ENCODE measurements at regions of chr18 and their contacts with region 1.

Region 1: GRCh38 chr18:23629444-23629946 is 33.2 kb downstream of the ANKRD29 start:
- DNase-seq: no peak
- H3K4me3 ChIP-seq: no peak overlapping the region
- H3K27ac ChIP-seq: no peak overlapping the region
- H3K4me1 ChIP-seq: peaks cover 23% of the 10 kb centered on the region
- H3K27me3 ChIP-seq: peaks cover 0 to 4% of the 10 kb centered on the region in 2 experiments
- CTCF ChIP-seq: no peak
- POLR2A ChIP-seq: no peak

Region 2: DNA sequence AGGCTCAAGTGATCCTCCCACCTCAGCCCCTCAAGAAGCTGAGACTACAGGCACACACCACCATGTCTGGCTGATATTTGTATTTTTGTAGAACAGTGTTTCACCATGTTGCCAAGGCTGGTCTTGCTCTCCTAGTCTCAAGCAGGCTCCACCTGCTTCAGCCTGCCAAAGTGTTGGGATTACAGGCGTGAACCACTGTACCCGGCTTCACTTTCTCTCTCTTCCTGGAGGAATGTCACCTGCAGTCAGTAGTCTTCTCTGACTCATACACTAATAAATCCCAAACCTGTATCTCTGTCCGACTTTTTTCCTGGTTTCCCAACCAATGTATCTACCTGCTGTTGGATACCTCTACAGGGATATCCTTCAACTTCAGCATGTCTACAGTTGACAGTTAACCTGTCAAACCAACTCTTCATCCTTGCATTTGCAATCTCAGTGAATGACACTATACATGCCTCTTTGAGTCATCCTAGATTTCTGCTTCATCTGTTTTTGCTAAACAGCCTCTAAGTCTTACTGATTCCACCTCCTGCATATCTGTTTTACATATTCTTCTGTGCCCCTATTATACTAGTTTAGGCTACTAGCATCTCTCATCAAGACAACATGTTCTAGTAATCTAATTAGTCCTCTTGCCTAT is 641.8 kb before region 1 on chr18:
- CTCF ChIA-PET with region 1: no interaction called
- POLR2A ChIA-PET with region 1: no interaction called
- dilution Hi-C with region 1: no loop called
- intact Hi-C with region 1: no loop called
- DNase-seq: no peak
- H3K4me3 ChIP-seq: no peak overlapping the region
- H3K27ac ChIP-seq: no peak overlapping the region
- H3K4me1 ChIP-seq: no peaks in the 10 kb centered on the region
- H3K27me3 ChIP-seq: no peaks in the 10 kb centered on the region
- CTCF ChIP-seq: no peak
- POLR2A ChIP-seq: no peak

Region 3: DNA sequence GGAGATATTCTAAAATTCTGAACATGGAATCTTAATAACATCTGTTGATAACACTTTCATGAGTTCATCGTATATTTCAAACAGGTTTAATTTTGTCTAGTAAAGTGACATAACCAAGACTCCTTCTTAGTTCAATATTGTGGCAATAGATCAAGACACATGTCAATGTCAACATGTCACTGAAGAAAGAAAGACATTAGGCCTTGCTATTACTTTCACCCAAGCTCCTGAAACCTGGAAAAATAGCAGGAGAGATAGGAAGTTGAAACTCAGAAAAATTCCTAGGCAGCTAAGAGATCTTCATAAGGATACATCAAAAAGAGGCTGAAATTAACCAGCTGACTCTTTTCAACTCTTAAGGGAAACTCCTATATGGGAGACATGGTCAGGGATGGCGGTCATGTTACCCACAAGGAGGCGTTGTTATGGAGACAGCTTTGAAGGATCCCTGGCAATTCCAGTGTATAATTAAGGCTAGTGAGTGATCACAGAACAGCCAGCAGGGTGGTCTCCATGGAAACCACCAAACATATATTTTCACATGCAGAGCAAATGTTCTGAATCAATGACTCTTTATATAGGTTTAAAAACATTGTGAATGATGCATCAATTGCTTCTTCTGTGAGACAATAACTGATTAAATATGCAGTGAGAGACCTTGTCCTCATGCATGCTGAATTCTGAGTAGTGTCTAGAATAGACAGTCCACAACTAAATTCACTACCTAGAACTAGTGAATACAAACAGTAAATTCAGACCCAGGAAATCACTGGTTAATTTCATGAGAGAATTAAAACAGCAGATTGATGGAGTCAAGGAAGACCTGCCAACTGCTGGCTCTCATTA is 291.7 kb before region 1 on chr18:
- CTCF ChIA-PET with region 1: no interaction called
- POLR2A ChIA-PET with region 1: no interaction called
- dilution Hi-C with region 1: no loop called
- intact Hi-C with region 1: no loop called
- DNase-seq: peak; percentile 58
- H3K4me3 ChIP-seq: no peak overlapping the region
- H3K27ac ChIP-seq: no peak overlapping the region
- H3K4me1 ChIP-seq: peaks cover 11% of the 10 kb centered on the region
- H3K27me3 ChIP-seq: no peaks in the 10 kb centered on the region
- CTCF ChIP-seq: no peak
- POLR2A ChIP-seq: no peak

Region 4: GRCh38 chr18:23612435-23613085 is 16.9 kb before region 1 on chr18:
- CTCF ChIA-PET with region 1: interaction called, 10 read pairs
- POLR2A ChIA-PET with region 1: no interaction called
- dilution Hi-C with region 1: no loop called
- intact Hi-C with region 1: no loop called
- DNase-seq: no peak
- H3K4me3 ChIP-seq: no peak overlapping the region
- H3K27ac ChIP-seq: no peak overlapping the region
- H3K4me1 ChIP-seq: no peaks in the 10 kb centered on the region
- H3K27me3 ChIP-seq: peaks cover 5 to 10% of the 10 kb centered on the region in 2 experiments
- CTCF ChIP-seq: no peak
- POLR2A ChIP-seq: no peak

Region 5: DNA sequence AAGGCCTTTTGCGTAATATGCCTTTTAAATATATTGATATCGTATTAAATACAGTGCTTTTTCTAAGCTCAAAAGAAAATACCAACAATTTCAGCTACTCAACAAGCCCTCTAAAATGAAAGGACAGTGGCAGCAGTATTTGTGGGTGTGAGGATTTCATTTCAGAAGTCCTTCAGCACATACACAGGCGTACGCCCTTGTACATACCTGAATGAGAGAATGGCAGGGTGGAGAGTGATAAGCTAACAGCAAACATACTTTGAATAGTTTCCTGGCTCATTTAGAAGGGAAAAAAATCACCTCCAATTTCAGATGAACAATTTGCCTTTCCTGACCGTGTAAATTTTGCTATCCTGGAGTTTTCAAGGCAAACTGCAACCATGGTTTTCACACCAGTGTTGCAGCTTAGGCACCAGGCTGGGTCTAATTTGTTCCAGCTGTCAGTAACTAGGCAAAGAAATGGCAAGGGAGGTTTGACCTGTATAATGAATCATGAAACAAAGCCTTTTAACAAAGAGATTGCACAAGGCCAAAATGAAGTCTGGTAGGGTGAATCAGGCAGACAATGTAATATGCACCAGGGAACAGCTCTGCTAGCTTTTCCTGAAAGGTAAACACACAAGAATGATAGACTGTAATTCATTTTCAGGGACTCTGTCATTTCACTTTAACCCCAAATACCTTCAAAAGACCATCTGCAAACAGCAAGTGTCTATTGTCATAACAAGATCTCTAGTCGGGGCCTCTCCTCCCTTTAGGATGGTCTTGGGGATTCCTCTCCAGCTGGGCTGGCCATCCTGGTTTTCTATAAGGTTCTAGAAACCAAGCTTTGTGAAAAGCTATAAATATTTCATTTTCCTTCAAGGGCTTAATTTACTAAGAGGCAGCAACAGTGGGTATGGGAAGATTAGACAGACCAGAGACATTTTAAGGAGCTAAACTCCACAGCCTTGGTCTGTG is 21.8 kb after region 1 on chr18:
- CTCF ChIA-PET with region 1: interaction called, 6 read pairs
- POLR2A ChIA-PET with region 1: no interaction called
- dilution Hi-C with region 1: no loop called
- intact Hi-C with region 1: loop called (anchors 2 kb)
- DNase-seq: peak; percentile 51
- H3K4me3 ChIP-seq: no peak overlapping the region
- H3K27ac ChIP-seq: no peak overlapping the region
- H3K4me1 ChIP-seq: peaks cover 10% of the 10 kb centered on the region
- H3K27me3 ChIP-seq: peaks cover 0 to 4% of the 10 kb centered on the region in 2 experiments
- CTCF ChIP-seq: no peak
- POLR2A ChIP-seq: no peak

Region 6: GRCh38 chr18:23662309-23663263 is 33.1 kb after region 1 on chr18 and contains the start of gene ANKRD29:
- CTCF ChIA-PET with region 1: interaction called, 4 read pairs
- POLR2A ChIA-PET with region 1: no interaction called
- dilution Hi-C with region 1: no loop called
- intact Hi-C with region 1: loop called (anchors 1 kb)
- DNase-seq: peak; percentile 16
- H3K4me3 ChIP-seq: peak within 1 kb of the TSS; percentile 30 to 38 (median 33)
- H3K27ac ChIP-seq: no peak within 1 kb of the TSS
- H3K4me1 ChIP-seq: peaks cover 3% of the 10 kb centered on the region
- H3K27me3 ChIP-seq: peaks cover 17 to 26% of the 10 kb centered on the region in 2 experiments
- CTCF ChIP-seq: no peak
- POLR2A ChIP-seq: no peak
- total RNA-seq, gene ANKRD29: 1.2 and 2.6 TPM in 2 replicates

Region 7: GRCh38 chr18:23689031-23689615 is 59.6 kb after region 1 on chr18 and contains the start of gene LAMA3:
- CTCF ChIA-PET with region 1: no interaction called
- POLR2A ChIA-PET with region 1: no interaction called
- dilution Hi-C with region 1: no loop called
- intact Hi-C with region 1: loop called (anchors 5 kb)
- DNase-seq: peak; percentile 53
- H3K4me3 ChIP-seq: peak within 1 kb of the TSS; percentile 36 to 76 (median 50)
- H3K27ac ChIP-seq: no peak within 1 kb of the TSS
- H3K4me1 ChIP-seq: peaks cover 13% of the 10 kb centered on the region
- H3K27me3 ChIP-seq: no peaks in the 10 kb centered on the region
- CTCF ChIP-seq: peak; percentile 7 to 33
- POLR2A ChIP-seq: no peak
- total RNA-seq, gene LAMA3: 7.1 and 12.3 TPM in 2 replicates

Region 8: DNA sequence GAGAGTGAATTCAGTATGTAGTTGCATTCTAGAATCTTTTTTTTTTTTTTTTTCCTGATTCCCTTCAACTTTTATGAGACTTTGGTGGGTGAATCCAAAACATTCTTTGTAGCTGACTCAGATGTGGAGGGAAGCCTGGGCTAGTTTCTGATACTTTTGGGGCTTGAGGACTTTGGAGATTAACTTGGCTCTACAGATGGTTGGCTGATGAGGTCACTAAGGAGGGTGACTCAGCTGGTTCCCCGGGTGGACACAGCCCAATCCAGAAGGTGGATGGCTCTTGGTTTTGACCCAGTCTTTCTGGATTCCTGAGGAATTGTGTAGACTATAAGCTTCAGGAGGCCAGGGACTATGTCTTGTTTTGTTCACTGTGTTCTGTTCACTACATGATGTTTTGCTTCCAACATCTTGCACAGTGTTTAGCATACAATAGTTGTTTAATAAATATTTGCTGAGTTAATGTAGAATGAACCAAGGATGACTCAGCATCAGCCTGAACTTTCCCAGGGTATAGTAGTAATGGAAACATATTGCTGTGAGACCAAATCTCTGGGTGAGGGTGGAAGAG is 90.2 kb after region 1 on chr18:
- CTCF ChIA-PET with region 1: interaction called, 3 read pairs
- POLR2A ChIA-PET with region 1: no interaction called
- dilution Hi-C with region 1: no loop called
- intact Hi-C with region 1: loop called (anchors 5 kb)
- DNase-seq: peak; percentile 88
- H3K4me3 ChIP-seq: no peak overlapping the region
- H3K27ac ChIP-seq: peak overlapping the region; percentile 84
- H3K4me1 ChIP-seq: peaks cover 19% of the 10 kb centered on the region
- H3K27me3 ChIP-seq: no peaks in the 10 kb centered on the region
- CTCF ChIP-seq: no peak
- POLR2A ChIP-seq: no peak

Region 9: DNA sequence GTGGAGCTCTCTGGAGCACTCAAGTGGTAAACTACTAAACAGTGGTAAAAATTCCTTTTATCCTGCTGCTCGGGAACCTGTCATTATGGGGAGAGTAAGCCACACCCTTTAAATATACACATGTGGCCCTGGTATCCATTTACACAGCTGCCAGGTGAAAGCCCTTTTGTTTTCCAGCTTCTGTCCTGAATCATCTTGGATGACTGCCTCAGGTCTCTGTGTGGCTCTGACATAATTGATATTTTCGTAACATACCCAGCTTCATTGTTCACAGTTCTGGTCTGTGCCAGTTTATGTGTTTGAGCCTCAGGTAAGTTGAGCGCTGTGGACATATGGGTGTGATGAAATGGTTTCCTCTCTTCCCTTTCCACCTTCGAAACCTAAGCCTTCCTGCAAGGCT is 369.3 kb after region 1 on chr18:
- CTCF ChIA-PET with region 1: no interaction called
- POLR2A ChIA-PET with region 1: no interaction called
- dilution Hi-C with region 1: no loop called
- intact Hi-C with region 1: no loop called
- DNase-seq: no peak
- H3K4me3 ChIP-seq: no peak overlapping the region
- H3K27ac ChIP-seq: no peak overlapping the region
- H3K4me1 ChIP-seq: peaks cover 3% of the 10 kb centered on the region
- H3K27me3 ChIP-seq: peaks cover 2 to 5% of the 10 kb centered on the region in 2 experiments
- CTCF ChIP-seq: no peak
- POLR2A ChIP-seq: no peak